ENCODE measurements at regions of chr14 and their contacts with region 1.

Region 1: DNA sequence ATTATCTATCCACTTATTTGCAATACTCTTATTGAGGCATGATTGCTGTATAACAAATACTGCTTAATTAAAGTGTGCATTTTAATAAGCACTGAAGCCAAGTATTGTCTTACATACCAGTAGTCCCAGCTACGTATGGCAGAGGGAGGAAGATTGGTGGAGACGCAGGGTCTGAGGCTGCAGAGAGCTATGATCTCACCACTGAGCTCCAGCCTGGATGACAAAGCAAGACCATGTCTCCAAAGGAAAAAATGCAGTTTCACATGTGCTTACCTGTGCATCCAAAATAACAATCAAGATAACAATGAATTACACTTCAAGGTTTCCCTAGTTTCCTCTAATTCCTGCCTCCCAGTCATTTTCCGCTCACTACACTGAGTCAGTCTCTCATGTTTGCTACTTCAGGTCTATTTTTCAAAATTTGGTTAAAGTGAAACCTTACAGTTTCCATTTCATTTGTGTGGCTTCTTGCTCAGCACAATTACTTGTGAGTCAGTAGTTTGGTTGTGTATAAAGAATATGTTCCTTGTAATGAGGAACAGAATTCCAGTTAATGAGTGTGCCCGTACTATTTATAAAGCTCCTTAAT is 1250.1 kb downstream of the TMEM121 start:
- DNase-seq: no peak
- ATAC-seq: peak; percentile 84
- H3K4me3 Mint-ChIP-seq: no peak overlapping the region
- H3K27ac Mint-ChIP-seq: no peak overlapping the region
- H3K4me1 Mint-ChIP-seq: peaks cover 23% of the 10 kb centered on the region
- H3K27me3 Mint-ChIP-seq: no peaks in the 10 kb centered on the region

Region 2: GRCh38 chr14:106547735-106548434 is 228.6 kb before region 1 on chr14:
- CTCF ChIA-PET with region 1: no interaction called
- POLR2A ChIA-PET with region 1: no interaction called
- intact Hi-C with region 1: loop called in 1 of 2 experiments (anchors 5 kb)
- DNase-seq: no peak
- ATAC-seq: peak; percentile 70
- H3K4me3 Mint-ChIP-seq: no peak overlapping the region
- H3K27ac Mint-ChIP-seq: peak overlapping the region; percentile 1
- H3K4me1 Mint-ChIP-seq: peaks cover 10% of the 10 kb centered on the region
- H3K27me3 Mint-ChIP-seq: peaks cover 12% of the 10 kb centered on the region

Region 3: GRCh38 chr14:106729551-106729950 is 46.9 kb before region 1 on chr14:
- CTCF ChIA-PET with region 1: interaction called, 3 read pairs
- POLR2A ChIA-PET with region 1: no interaction called
- intact Hi-C with region 1: loop called in 1 of 2 experiments (anchors 10 kb)
- DNase-seq: no peak
- ATAC-seq: peak; percentile 42
- H3K4me3 Mint-ChIP-seq: no peak overlapping the region
- H3K27ac Mint-ChIP-seq: no peak overlapping the region
- H3K4me1 Mint-ChIP-seq: peaks cover 14% of the 10 kb centered on the region
- H3K27me3 Mint-ChIP-seq: no peaks in the 10 kb centered on the region

Region 4: DNA sequence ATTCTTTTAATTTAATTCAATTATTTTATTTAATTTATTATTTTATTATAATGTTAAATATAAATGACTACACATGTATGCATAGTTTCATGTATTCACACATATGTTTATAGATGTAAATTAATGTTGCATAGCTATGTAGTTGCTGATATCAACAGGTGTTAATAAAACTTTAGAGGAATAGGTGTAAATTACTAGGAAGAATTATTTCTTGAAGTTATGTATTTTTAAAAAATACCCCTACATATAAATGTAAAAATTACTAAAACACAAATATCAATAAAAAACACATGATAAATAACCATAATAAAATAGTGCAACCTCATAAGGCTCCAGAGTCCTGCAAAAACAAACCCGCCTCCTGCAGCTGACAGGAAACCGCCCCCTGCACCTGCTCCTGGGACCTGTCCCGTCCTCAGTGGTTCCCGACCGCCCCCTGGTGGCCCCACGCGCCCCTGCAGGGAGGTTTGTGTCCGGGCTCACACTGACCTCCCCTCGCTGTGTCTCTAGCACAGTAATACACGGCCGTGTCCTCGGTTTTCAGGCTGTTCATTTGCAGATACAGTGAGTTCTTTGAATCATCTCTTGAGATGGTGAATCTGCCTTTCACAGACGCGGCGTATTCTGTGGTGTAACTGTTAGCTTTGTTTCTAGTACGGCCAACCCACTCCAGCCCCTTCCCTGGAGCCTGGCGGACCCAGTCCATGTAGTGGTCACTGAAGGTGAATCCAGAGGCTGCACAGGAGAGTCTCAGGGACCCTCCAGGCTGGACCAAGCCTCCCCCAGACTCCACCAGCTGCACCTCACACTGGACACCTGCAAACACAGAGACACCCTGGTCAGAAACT is 13.9 kb after region 1 on chr14:
- CTCF ChIA-PET with region 1: interaction called, 14 read pairs
- POLR2A ChIA-PET with region 1: no interaction called
- intact Hi-C with region 1: no loop called
- DNase-seq: peak; percentile 91
- ATAC-seq: peak; percentile 87
- H3K4me3 Mint-ChIP-seq: no peak overlapping the region
- H3K27ac Mint-ChIP-seq: no peak overlapping the region
- H3K4me1 Mint-ChIP-seq: peaks cover 9% of the 10 kb centered on the region
- H3K27me3 Mint-ChIP-seq: peaks cover 6% of the 10 kb centered on the region